ENCODE measurements at regions of chr15 and their contacts with region 1.

Region 1: DNA sequence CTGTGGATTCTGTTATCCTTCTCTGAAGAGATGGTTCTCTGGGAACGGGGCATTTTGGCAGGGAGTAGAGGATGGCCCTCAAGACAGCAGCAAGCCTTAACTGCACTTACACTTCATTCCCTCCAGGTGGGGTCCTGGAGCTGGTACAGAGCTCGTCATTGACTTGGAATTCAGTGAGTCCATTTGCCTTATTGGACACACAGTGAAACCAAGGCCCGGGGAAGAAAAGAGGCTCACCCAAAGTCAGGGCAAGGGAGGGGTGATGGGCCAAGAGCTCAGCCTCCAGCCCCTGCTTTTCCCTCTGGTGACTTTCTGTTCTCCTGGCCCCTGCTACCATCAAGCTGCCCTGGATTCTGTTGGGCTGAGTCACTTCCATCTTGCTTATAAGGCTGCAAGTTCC is 125.6 kb downstream of the ETFA start:
- DNase-seq: peak; percentile 66
- H3K4me3 ChIP-seq: no peak overlapping the region
- H3K27ac ChIP-seq: no peak overlapping the region
- H3K4me1 ChIP-seq: peaks cover 5% of the 10 kb centered on the region
- H3K27me3 ChIP-seq: peaks cover 0 to 3% of the 10 kb centered on the region in 2 experiments
- CTCF ChIP-seq: peak; percentile 59 to 68
- POLR2A ChIP-seq: no peak

Region 2: DNA sequence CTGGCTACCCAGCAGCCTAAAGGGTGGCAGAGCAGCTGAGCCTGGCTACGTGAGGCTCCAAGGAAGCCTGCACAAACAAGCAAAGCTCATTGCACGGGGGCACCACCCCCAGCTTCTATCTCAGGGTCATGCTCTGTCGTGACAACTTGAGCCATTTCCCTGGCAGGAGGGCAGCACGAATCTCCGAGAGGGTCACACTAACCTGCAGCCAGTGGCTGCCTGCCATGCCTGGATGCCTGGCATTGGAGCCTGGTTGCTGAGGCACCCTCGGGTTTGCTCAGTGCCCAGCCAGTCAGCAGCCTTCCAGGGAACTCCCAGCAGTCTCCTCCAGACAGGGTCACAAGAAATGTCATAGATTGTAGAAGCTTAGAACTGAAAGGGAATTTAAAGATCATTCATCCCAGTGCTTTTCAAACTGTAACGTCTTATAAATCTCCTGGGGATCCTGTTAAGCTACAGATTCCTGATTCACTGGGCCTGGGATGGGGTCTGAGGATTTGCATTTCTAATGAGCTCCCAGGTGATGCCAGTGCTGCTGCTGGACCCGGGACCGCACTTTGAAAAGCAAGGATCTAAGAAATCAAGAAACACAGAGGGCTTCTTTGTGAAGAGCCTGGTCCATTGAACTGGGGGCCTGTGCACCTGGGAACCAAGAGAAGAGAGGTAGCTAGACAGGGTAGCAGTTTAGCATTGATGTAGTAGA is 77.5 kb before region 1 on chr15:
- CTCF ChIA-PET with region 1: no interaction called
- POLR2A ChIA-PET with region 1: no interaction called
- dilution Hi-C with region 1: no loop called
- intact Hi-C with region 1: no loop called
- DNase-seq: no peak
- H3K4me3 ChIP-seq: no peak overlapping the region
- H3K27ac ChIP-seq: no peak overlapping the region
- H3K4me1 ChIP-seq: no peaks in the 10 kb centered on the region
- H3K27me3 ChIP-seq: peaks cover 0 to 2% of the 10 kb centered on the region in 2 experiments
- CTCF ChIP-seq: no peak
- POLR2A ChIP-seq: no peak

Region 3: GRCh38 chr15:76196269-76197231 is 10.8 kb after region 1 on chr15:
- CTCF ChIA-PET with region 1: interaction called, 17 read pairs
- POLR2A ChIA-PET with region 1: no interaction called
- dilution Hi-C with region 1: no loop called
- intact Hi-C with region 1: no loop called
- DNase-seq: peak; percentile 86
- H3K4me3 ChIP-seq: no peak overlapping the region
- H3K27ac ChIP-seq: no peak overlapping the region
- H3K4me1 ChIP-seq: peaks cover 14% of the 10 kb centered on the region
- H3K27me3 ChIP-seq: peaks cover 0 to 2% of the 10 kb centered on the region in 2 experiments
- CTCF ChIP-seq: no peak
- POLR2A ChIP-seq: no peak

Region 4: DNA sequence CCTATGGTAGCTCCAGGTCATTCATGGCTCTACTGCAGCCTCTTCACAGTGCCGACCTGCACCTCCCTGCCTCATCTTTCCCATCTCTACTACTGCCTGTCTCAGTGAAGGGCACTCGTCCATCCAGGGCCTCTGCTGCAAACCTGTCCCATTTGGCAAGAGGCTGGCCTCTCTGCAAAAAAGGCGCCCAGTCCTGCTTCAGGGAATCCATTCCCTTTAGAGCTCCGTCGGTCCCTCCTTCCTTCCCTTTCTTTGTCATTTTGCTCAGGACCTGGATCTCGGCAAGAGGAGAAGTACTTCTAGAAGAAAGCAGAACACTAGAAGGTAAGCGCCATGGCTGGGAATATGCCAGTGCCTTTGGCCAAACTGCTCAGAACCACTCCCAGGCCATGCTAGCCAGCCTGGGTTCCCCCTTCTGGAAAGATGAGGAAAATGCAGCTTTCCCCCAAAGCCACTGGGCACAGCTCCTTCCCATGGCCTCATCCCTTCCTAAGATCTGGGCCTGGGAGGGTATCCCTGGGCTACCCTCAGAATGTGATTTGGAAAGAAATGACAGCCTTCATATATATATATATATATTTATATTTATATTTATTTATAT is 144.5 kb after region 1 on chr15:
- CTCF ChIA-PET with region 1: interaction called, 54 read pairs
- POLR2A ChIA-PET with region 1: no interaction called
- dilution Hi-C with region 1: no loop called
- intact Hi-C with region 1: loop called (anchors 1 kb)
- DNase-seq: peak; percentile 57
- H3K4me3 ChIP-seq: no peak overlapping the region
- H3K27ac ChIP-seq: no peak overlapping the region
- H3K4me1 ChIP-seq: no peaks in the 10 kb centered on the region
- H3K27me3 ChIP-seq: peaks cover 25 to 36% of the 10 kb centered on the region in 2 experiments
- CTCF ChIP-seq: peak; percentile 35 to 74
- POLR2A ChIP-seq: no peak

Region 5: DNA sequence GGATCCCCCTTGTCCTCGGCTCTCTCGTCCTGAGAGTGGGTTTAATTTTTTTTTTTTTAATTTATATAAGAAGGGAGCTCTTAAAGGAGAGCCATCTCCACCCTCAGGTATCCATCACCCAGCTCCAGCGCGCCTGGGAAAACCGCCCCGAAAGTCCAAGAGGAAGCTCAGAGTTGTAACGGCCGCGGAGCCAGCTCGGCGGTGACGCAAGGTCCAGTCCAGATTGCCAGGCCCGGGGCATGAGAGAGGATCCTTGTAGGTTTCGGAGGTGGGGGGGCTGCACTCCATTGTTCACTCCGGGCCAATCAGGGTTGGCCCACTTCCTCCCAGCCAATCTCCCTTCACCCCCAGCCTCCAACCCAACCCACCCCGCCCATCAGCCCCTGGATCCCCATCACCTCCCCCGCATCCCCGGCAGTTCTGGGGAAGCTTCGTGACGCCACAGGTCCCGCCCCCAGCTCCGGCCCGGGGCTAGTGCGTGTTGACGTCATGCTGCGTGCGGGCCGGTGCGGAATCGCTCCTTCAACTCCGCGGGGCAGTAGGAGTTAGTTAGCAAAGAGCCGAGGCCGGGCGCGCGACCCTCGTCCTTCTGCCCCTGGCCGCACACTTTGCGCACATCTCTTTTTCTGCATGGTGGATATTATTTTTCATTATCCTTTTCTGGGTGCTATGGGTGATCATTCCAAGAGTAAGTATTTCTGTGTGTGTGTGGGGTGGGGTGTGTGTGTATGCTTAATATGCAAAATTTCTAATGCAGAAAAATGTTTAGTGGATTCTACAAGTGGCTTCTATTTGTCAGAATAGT is 150.7 kb after region 1 on chr15 and contains the start of gene ISL2:
- CTCF ChIA-PET with region 1: interaction called, 54 read pairs
- POLR2A ChIA-PET with region 1: interaction called, 5 read pairs
- dilution Hi-C with region 1: no loop called
- intact Hi-C with region 1: no loop called
- DNase-seq: peak; percentile 60
- H3K4me3 ChIP-seq: peak within 1 kb of the TSS in 2 of 3 experiments; percentile 28 to 52
- H3K27ac ChIP-seq: no peak within 1 kb of the TSS
- H3K4me1 ChIP-seq: peaks cover 20% of the 10 kb centered on the region
- H3K27me3 ChIP-seq: peaks cover 54 to 74% of the 10 kb centered on the region in 2 experiments
- CTCF ChIP-seq: no peak
- POLR2A ChIP-seq: peak; percentile 32
- total RNA-seq, gene ISL2: not detected in 2 replicates

Region 6: GRCh38 chr15:76866716-76867321 is 681.1 kb after region 1 on chr15:
- CTCF ChIA-PET with region 1: interaction called, 18 read pairs
- POLR2A ChIA-PET with region 1: no interaction called
- dilution Hi-C with region 1: no loop called
- intact Hi-C with region 1: loop called (anchors 1 kb)
- DNase-seq: peak; percentile 64
- H3K4me3 ChIP-seq: no peak overlapping the region
- H3K27ac ChIP-seq: no peak overlapping the region
- H3K4me1 ChIP-seq: no peaks in the 10 kb centered on the region
- H3K27me3 ChIP-seq: no peaks in the 10 kb centered on the region
- CTCF ChIP-seq: peak; percentile 15 to 33
- POLR2A ChIP-seq: no peak

Measured in endothelial cell of umbilical vein (primary cell).